Gastrocnemius medialis (tissue), 4 donors: ENCODE measurements at regions of chr1 and their contacts with region 1.

Region 1: GRCh38 chr1:14733048-14733778 is 134.7 kb downstream of the KAZN start:
- DNase-seq: no peak
- ATAC-seq: no peak
- H3K4me3 ChIP-seq: no peak overlapping the region
- H3K27ac ChIP-seq: no peak overlapping the region
- H3K4me1 ChIP-seq: no peaks in the 10 kb centered on the region
- H3K27me3 ChIP-seq: peaks cover 0 to 7% (median 3%) of the 10 kb centered on the region in 3 donors
- CTCF ChIP-seq: no peak
- POLR2A ChIP-seq: no peak

Region 2: GRCh38 chr1:14108356-14109275 is 624.6 kb before region 1 on chr1:
- in situ Hi-C with region 1: no loop called
- intact Hi-C with region 1: loop called (anchors 10 kb)
- DNase-seq: no peak
- ATAC-seq: no peak
- H3K4me3 ChIP-seq: no peak overlapping the region
- H3K27ac ChIP-seq: no peak overlapping the region
- H3K4me1 ChIP-seq: no peaks in the 10 kb centered on the region
- H3K27me3 ChIP-seq: peaks cover 0 to 3% (median 0%) of the 10 kb centered on the region in 3 donors
- CTCF ChIP-seq: no peak
- POLR2A ChIP-seq: no peak